Posterior cingulate gyrus (tissue), 11 donors: ENCODE measurements at regions of chr4 and their contacts with region 1.

Region 1: DNA sequence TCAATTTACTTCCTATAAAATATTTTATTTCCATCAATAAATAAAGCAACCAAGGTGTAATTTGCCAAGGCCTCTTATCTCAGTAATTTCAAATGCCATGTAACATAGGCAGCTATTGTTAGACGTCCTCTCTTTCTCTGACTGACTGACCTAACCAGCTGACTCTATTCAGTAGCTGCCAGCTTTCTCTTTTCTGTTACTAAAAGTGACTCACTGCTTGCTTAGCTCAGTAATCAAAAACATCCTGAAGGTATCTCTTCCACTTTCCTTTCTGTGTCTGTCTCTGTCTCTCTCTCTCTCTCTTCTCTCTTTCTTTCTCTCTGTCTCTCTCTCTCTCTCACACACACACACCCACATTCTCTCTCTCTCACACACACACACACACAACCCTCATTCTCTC is 134.2 kb downstream of the SPOCK3 start:
- DNase-seq: peak in 1 of 10 donors; percentile 17

Region 2: DNA sequence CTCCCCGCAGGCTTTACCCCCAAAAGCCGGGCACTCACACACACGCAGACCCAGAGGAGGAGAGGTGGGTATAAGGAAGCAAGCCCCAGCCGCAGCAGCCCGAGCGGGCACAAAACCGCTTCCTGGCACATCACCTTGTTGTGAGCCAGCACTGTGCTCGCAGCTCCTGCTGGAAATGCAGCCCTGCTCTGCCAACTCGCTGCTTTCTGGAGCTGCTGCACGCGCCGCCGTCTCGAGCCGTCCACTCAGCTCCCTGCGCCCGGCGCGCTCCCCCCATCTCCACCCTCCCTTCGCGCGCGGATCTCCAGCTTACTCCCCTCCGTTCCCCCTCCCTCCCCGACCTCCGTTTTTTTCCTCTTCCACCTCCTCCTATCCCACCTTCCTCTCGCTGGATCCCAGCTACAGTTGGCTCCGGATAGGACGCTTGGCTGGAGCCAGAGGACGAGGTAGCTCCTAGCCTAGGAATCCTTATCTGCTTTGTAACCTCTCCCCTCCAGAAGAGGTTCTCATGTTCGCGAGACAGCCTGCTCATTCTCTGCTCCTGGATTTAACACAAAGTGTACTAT is 134.3 kb after region 1 on chr4 and contains the start of gene SPOCK3:
- intact Hi-C with region 1: loop called (anchors 10 kb)
- DNase-seq: peak; percentile 70 to 97 (median 82)